Heart right ventricle (tissue), 16 donors: ENCODE measurements at regions of chr7 and their contacts with region 1.

Region 1: DNA sequence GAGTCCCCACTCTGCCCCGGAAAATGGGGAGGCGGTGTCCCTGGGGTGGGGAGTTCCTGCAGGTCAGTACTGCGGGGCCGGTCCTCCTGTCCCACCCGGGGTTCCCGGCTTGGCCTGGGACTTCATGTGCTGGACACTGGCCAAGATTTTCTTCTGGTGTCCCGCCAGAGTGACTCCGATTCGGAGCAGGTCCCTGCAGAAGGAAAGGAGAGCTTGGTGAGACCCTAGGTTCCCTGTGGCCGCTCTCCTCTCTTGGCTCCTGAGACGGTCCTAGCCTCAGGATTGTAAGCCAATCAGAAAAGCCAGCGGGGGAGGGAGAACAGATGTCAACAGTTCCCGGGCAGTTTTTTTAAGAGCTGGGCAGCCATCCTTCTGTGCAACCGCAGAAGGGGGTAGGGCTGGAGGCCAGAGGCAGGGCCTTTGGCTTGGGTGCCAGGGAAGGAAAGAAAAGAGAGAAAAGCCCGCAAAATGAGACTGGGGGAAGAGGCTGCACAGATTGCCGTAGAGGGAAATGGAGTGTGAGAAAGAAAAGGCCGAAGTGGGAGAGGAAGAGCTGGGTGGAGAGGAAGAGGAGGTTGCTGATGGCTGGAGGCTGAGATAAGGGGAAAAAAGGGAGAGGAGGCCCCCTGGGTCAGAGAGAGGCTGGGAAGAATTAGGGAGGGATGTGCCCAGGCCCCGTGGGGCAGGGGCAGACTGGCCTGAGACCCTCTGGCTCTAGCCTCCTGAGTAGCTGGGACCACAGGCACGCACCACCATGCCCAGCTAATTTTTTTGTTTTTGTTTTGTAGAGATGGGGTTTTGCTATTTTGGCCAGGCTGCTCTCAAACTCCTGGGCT is 23.7 kb downstream of the EPHB4 start:
- DNase-seq: peak; percentile 54 to 85
- ATAC-seq: peak; percentile 73 to 89 (median 82)
- H3K4me3 ChIP-seq: peak overlapping the region in 6 of 10 donors; percentile 7 to 29 (median 22)
- H3K27ac ChIP-seq: peak overlapping the region; percentile 26 to 63 (median 52)
- H3K4me1 ChIP-seq: peaks cover 18 to 62% (median 28%) of the 10 kb centered on the region in 9 donors
- H3K27me3 ChIP-seq: peaks cover 0 to 15% (median 3%) of the 10 kb centered on the region in 7 donors
- CTCF ChIP-seq: no peak

Region 2: DNA sequence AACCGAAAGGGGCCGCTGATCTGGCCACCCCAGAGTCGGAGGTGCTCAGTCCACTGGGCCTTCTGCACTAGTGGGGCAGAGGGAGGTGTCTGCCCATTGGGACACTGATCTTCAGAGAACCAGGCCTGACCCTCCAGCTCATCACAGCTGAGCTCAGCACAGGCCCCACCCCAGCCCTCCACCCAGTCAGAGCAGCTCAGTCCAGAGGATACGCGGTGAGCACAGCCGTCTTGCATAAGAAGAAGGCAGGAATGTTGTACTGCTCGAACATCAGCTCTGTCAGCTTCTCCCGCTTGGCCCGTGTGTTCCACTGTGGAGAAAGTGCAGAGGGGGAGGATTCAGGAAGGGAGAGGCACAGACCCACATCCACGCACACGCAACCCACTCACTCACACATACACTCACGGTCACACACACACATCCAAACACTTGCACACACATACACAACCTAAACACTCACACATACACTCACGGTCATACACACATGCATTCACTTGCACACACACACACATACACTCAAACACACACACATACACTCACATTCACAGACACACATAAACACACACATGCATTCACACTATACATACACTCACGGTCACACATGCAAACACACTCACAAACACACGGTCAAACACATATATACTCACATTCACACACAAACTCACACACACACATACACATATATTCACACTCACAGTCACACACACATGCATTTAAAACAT is 153.6 kb before region 1 on chr7:
- intact Hi-C with region 1: no loop called
- DNase-seq: no peak
- ATAC-seq: no peak
- H3K4me3 ChIP-seq: no peak overlapping the region
- H3K27ac ChIP-seq: no peak overlapping the region
- H3K4me1 ChIP-seq: no peaks in the 10 kb centered on the region
- H3K27me3 ChIP-seq: peaks cover 0 to 76% (median 51%) of the 10 kb centered on the region in 7 donors
- CTCF ChIP-seq: no peak

Region 3: DNA sequence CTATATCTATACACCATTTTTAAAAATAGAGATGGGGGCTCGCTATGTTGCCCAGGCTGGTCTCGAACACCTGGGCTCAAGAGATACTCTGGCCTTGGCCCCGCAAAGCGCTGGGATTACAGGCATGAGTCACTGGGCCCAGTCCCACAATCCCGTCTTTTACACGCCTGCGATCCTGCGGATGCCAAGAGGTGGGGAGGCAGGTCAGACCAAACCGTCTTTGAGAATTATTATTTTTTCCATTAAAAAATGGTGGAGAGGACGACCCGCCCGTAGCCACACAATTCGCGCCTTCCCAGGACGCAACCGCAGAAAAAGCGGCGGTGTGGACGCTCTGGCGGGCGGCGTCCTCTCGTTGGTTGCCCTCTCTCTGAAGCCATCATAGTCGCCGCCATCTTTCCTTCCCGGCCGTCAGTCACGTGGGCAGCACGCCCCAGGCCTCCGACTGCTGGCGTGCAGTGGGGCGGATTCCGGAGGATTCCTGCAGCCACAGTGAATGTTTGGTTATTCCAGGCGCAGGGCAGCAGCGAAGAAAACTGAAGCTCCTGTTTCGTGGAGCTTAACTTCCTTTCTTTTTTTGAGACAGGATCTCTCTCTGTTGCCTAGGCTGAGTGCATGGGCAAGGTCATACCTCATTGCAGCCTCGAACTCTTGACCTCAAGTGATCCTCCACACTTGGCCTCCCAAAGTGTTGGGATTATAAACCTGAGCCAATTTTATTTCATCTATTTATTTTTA is 33.7 kb after region 1 on chr7:
- intact Hi-C with region 1: loop called in 1 of 10 experiments (anchors 5 kb)
- DNase-seq: peak; percentile 91 to 95
- ATAC-seq: peak; percentile 93 to 96 (median 94)
- H3K4me3 ChIP-seq: peak overlapping the region; percentile 18 to 62 (median 51)
- H3K27ac ChIP-seq: peak overlapping the region; percentile 59 to 95 (median 91)
- H3K4me1 ChIP-seq: peaks cover 0 to 26% (median 12%) of the 10 kb centered on the region in 9 donors
- H3K27me3 ChIP-seq: no peaks in the 10 kb centered on the region
- CTCF ChIP-seq: peak in 2 of 9 donors; percentile 5 to 23